Dorsolateral prefrontal cortex (tissue), 120 donors: ENCODE measurements at regions of chr9 and their contacts with region 1.

Region 1: GRCh38 chr9:8857926-8858595 is 1058.5 kb upstream of the DMAC1 start:
- DNase-seq: peak; percentile 66 to 88 (median 84)
- H3K4me3 ChIP-seq: peak overlapping the region; percentile 58 to 94 (median 78)
- H3K27ac ChIP-seq: peak overlapping the region; percentile 73 to 98 (median 94)
- H3K27me3 ChIP-seq: no peaks in the 10 kb centered on the region
- CTCF ChIP-seq: peak in 1 of 56 donors; percentile 1

Region 2: DNA sequence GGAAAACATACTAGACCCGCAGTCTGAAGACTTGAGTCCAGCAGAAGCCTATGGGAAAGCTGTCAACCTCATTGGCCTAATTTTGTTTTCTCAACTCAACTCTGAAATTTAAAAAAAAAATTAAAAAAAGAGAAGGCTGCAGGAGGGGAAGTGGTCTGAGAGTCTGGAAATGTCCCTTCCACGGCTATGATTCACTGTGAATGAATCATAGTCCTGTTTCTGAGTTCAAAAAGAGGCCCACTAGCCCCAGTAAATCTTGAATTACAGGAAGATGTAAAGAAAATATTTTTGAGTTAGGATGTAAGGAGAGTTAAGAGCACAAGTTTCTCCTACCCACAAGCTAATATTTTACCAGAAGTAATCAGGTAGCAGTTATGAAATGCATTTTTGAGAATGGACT is 493.0 kb before region 1 on chr9:
- intact Hi-C with region 1: loop called in 1 of 2 experiments (anchors 10 kb)
- DNase-seq: no peak
- H3K4me3 ChIP-seq: no peak overlapping the region
- H3K27ac ChIP-seq: peak overlapping the region in 58 of 59 donors; percentile 48 to 93 (median 80)
- H3K27me3 ChIP-seq: no peaks in the 10 kb centered on the region
- CTCF ChIP-seq: no peak

Region 3: DNA sequence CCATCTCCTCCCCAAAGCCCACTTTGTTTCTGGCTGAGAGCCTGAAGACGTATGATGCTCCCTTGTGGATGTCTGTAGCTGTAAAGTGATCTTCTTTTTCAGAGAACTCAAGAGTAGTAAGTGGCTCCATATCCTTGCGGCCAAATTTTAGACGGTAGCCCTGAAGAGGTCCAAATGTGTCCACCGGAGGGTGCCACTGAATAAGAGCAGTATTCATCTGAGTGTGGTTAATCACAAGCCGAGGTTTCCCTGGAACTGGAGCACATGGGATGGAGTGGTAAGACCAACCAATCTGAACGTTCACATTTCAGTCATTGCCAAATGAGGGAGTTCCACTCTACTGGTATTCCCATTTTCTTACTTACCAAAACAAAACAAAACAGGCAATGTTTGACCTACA is 372.0 kb before region 1 on chr9:
- intact Hi-C with region 1: loop called in 1 of 2 experiments (anchors 10 kb)
- DNase-seq: peak in 2 of 10 donors; percentile 44 to 53
- H3K4me3 ChIP-seq: no peak overlapping the region
- H3K27ac ChIP-seq: peak overlapping the region in 11 of 59 donors; percentile 3 to 52 (median 26)
- H3K27me3 ChIP-seq: no peaks in the 10 kb centered on the region
- CTCF ChIP-seq: peak in 45 of 56 donors; percentile 9 to 57 (median 33)

Region 4: DNA sequence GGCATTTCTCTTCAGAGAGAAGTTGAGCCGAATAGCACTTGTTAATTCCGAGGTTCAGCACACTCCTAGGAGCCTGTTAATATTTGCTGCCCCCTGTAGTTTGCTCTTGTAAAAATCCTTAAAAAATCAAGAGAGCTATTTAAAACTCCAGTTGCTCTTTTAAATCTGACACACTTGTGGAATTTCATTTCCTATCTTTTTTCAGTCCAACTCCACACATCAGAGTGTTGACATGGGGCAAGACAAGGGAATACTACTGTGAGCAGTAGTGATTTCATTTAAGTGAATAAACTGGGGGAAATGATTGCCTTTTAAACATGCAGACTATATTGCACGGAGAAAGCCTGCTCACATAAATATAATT is 37.8 kb after region 1 on chr9:
- intact Hi-C with region 1: loop called (anchors 2 to 5 kb)
- DNase-seq: no peak
- H3K4me3 ChIP-seq: peak overlapping the region in 52 of 59 donors; percentile 6 to 64 (median 33)
- H3K27ac ChIP-seq: peak overlapping the region in 54 of 59 donors; percentile 5 to 92 (median 75)
- H3K27me3 ChIP-seq: no peaks in the 10 kb centered on the region
- CTCF ChIP-seq: peak; percentile 26 to 90 (median 74)

Region 5: DNA sequence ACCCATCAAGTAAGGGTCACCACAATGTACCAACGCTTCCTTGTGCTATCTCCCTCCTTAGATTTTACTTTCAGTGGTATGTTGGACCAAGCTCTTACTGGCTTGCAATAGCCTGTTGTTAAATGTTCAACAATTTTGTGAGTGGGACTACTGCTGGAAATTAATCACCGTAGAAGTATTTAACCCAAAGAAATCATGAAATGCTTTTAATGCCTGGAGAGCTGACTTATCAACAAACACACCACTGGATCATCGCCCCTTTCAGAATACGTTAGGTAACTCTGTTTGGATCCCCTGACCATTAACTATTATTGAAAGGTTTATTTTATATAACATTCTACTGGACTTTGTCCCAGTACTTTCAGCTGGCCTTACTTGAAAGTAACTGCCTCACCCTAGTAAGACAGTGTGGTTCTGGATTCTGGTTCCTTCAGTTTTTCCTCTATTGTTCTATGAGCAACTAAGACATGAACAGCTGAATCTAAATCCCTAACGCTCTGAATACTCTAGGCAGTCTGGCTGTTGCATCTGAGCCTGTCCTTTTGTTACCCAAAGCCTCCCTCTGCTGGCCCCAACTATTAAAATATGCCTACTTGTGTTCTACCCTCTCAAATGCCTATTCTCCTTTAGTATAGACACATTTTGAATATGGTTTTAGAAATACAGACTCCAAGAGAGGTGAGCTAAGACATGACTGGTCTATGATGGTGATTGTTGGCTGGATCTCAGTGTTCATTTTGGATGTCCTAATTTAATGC is 144.9 kb after region 1 on chr9:
- intact Hi-C with region 1: loop called in 1 of 2 experiments (anchors 10 kb)
- DNase-seq: peak in 5 of 10 donors; percentile 5 to 69 (median 33)
- H3K4me3 ChIP-seq: no peak overlapping the region
- H3K27ac ChIP-seq: peak overlapping the region in 40 of 59 donors; percentile 1 to 77 (median 50)
- H3K27me3 ChIP-seq: no peaks in the 10 kb centered on the region
- CTCF ChIP-seq: peak in 53 of 56 donors; percentile 15 to 79 (median 52)